Activated naive CD4-positive, alpha-beta T cell treated with anti-CD3 and anti-CD28 coated beads, Interleukin-2, amount 10 ng/mL, durations not matched to agents 7 days and 5 days (primary cell): ENCODE measurements at regions of chr1 and their contacts with region 1.

Region 1: DNA sequence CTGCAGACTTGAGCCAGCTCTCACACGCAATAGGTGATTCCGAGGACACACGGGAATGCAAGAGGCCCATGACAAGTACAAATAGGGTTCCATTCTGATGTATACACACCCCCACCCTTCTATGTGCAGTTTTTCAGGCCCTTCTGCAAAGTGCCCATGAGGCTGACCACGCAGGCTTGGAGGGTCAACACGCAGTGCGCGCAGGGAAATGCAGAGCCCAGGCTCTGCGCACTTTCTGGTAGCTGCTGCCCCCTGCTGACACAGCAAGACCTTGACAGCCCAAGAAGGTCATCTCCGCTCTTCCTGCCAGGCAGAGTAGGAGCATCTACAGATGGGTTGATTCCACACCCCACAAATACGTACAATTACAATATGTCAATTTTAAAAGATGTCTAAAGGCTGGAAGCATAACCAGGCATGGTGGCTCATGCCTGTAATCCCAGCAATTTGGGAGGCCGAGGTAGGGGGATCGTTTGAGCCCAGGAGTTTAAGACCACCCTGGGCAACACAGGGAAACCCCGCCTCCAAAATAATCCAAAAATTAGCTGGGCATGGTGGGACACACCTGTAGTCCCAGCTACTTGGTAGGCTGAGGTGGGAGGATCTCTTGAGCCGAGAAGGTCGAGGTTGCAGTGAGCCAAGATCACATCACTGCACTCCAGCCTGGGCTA is 18.5 kb downstream of the SH3BP5L start:
- DNase-seq: peak; percentile 72
- H3K4me3 Mint-ChIP-seq: no peak overlapping the region
- H3K27ac Mint-ChIP-seq: no peak overlapping the region
- H3K4me1 Mint-ChIP-seq: peaks cover 9% of the 10 kb centered on the region
- H3K27me3 Mint-ChIP-seq: peaks cover 9% of the 10 kb centered on the region

Region 2: DNA sequence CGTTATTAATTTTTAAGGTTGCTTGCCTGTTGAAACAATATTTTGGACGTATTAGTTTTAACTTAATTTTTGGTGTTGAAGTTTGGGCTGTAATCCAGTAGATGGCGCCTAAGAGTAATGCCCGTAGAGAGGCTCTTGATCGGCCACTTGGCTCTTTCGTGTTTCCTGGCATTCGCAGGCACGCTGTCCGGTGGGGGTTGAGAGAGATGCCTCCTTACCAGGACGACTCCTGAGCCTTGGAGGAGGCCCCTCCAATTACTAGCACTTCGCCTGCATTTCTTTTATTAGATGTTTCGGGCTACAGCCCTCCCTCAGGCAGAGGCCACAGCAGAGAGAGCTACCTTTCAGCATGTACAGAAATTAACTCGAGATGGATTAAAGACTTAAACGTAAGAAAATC is 564.0 kb before region 1 on chr1:
- CTCF ChIA-PET with region 1: interaction called, 11 read pairs
- DNase-seq: peak; percentile 44
- H3K4me3 Mint-ChIP-seq: no peak overlapping the region
- H3K27ac Mint-ChIP-seq: no peak overlapping the region
- H3K4me1 Mint-ChIP-seq: peaks cover 2% of the 10 kb centered on the region
- H3K27me3 Mint-ChIP-seq: peaks cover 3% of the 10 kb centered on the region

Region 3: GRCh38 chr1:248404024-248404423 is 403.2 kb before region 1 on chr1:
- CTCF ChIA-PET with region 1: interaction called, 23 read pairs
- DNase-seq: no peak
- H3K4me3 Mint-ChIP-seq: no peak overlapping the region
- H3K27ac Mint-ChIP-seq: no peak overlapping the region
- H3K4me1 Mint-ChIP-seq: peaks cover 4% of the 10 kb centered on the region
- H3K27me3 Mint-ChIP-seq: no peaks in the 10 kb centered on the region

Region 4: GRCh38 chr1:248622570-248623001 is 184.6 kb before region 1 on chr1:
- CTCF ChIA-PET with region 1: interaction called, 63 read pairs
- DNase-seq: no peak
- H3K4me3 Mint-ChIP-seq: no peak overlapping the region
- H3K27ac Mint-ChIP-seq: no peak overlapping the region
- H3K4me1 Mint-ChIP-seq: no peaks in the 10 kb centered on the region
- H3K27me3 Mint-ChIP-seq: no peaks in the 10 kb centered on the region

Region 5: GRCh38 chr1:248793592-248793991 is 13.6 kb before region 1 on chr1:
- CTCF ChIA-PET with region 1: interaction called, 20 read pairs
- DNase-seq: no peak
- H3K4me3 Mint-ChIP-seq: no peak overlapping the region
- H3K27ac Mint-ChIP-seq: no peak overlapping the region
- H3K4me1 Mint-ChIP-seq: no peaks in the 10 kb centered on the region
- H3K27me3 Mint-ChIP-seq: peaks cover 5% of the 10 kb centered on the region